Prostate gland (tissue), 2 donors: ENCODE measurements at regions of chr10 and their contacts with region 1.

Region 1: DNA sequence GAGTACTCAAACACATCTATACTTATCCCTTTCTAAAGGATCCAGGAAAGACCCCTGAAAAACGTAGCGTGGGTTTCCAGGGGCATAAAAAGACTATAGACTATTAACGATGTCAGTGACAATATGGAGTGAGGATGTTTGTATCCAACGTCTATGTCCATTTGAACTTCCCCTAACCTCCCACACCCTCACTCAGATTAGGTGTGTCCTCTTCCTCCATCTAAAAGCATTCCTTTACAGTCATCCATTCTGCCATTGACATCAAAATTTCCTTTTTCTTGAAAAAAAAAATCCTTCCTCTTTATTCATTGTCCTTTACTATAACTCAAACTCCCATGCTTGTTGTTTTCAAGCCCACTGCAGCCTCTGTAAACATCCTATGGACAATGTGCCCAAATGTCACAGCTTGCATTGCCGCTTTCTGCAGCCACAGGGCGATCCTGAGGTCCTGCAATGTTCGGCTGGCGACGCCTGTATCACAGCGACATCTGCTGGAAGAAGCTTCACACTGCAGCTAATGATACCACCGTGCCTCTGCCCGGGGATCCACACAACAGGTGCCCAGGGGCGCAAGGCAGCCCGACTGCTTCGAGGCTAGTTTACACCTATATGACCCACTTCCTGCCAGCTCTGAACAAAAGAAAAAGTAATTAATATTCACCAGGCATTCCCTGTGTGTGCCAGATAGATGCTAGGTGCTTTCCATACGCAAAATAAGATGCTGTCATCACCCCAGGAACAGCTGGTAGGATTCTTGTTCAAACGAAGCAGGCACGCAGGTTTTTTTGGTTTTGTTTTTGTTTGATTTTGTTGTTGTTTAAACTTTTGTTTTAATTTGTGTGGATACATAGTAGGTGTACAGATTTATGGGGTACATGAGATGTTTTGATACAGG is 267.9 kb upstream of the GHITM start:
- DNase-seq: peak; percentile 57
- H3K4me3 ChIP-seq: no peak overlapping the region
- H3K27ac ChIP-seq: no peak overlapping the region
- H3K4me1 ChIP-seq: no peaks in the 10 kb centered on the region
- H3K27me3 ChIP-seq: no peaks in the 10 kb centered on the region
- CTCF ChIP-seq: peak; percentile 80 to 89 (median 86)
- POLR2A ChIP-seq: no peak

Region 2: DNA sequence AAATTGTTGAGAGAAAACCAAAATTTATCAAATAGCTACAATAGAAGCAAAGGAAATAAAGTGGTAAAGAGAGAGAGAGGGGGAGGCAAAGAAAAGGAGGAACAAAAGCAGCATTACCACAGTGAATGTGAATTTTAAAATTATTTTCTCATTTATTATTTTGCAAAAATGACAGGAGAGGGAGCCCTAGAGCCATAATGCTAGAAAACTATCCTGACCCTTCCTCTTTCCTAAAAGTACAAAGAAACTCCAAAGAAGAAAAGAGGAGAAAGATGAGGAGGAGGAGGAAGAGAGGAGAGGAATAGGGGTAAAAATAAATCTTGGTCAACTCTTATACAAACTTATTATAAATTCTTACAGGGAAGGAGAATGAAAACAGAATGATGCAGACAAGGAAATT is 1074.9 kb before region 1 on chr10:
- intact Hi-C with region 1: loop called (anchors 5 kb)
- DNase-seq: no peak
- H3K4me3 ChIP-seq: no peak overlapping the region
- H3K27ac ChIP-seq: no peak overlapping the region
- H3K4me1 ChIP-seq: no peaks in the 10 kb centered on the region
- H3K27me3 ChIP-seq: no peaks in the 10 kb centered on the region
- CTCF ChIP-seq: peak in 2 of 4 experiments; percentile 25 to 43
- POLR2A ChIP-seq: no peak

Region 3: GRCh38 chr10:83193026-83193425 is 678.4 kb before region 1 on chr10:
- intact Hi-C with region 1: no loop called
- DNase-seq: no peak
- H3K4me3 ChIP-seq: no peak overlapping the region
- H3K27ac ChIP-seq: no peak overlapping the region
- H3K4me1 ChIP-seq: no peaks in the 10 kb centered on the region
- H3K27me3 ChIP-seq: no peaks in the 10 kb centered on the region
- CTCF ChIP-seq: no peak
- POLR2A ChIP-seq: no peak

Region 4: GRCh38 chr10:83713423-83713822 is 158.0 kb before region 1 on chr10:
- intact Hi-C with region 1: no loop called
- DNase-seq: no peak
- H3K4me3 ChIP-seq: no peak overlapping the region
- H3K27ac ChIP-seq: no peak overlapping the region
- H3K4me1 ChIP-seq: no peaks in the 10 kb centered on the region
- H3K27me3 ChIP-seq: no peaks in the 10 kb centered on the region
- CTCF ChIP-seq: no peak
- POLR2A ChIP-seq: no peak